Endothelial cell of umbilical vein (primary cell): ENCODE measurements at regions of chr4 and their contacts with region 1.

Region 1: GRCh38 chr4:163166041-163166579 is 580 bp downstream of the NAF1 start:
- DNase-seq: peak; percentile 73
- H3K4me3 ChIP-seq: peak overlapping the region; percentile 97
- H3K27ac ChIP-seq: peak overlapping the region; percentile 83
- H3K4me1 ChIP-seq: peaks cover 28% of the 10 kb centered on the region
- H3K27me3 ChIP-seq: no peaks in the 10 kb centered on the region
- CTCF ChIP-seq: no peak
- POLR2A ChIP-seq: no peak

Region 2: DNA sequence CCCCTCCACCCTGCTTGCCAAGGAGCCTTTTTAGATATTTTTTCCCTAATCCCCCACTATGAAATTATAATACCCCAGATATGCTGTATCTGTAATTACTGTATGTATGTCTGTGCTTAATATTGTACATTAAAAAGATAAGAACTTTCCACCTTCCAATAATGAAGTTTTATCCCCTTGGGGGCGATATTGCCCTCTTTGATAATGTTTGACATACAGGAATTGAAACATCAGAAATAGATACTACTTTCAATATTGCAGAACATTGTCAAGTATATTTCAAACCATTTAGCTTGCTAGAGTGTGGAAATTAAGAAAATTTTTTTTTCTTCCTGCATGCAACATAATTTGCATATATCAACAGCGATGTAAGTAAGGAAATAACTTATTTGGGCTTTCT is 58.4 kb before region 1 on chr4:
- CTCF ChIA-PET with region 1: interaction called, 3 read pairs
- POLR2A ChIA-PET with region 1: no interaction called
- dilution Hi-C with region 1: no loop called
- intact Hi-C with region 1: loop called (anchors 2 kb)
- DNase-seq: peak; percentile 63
- H3K4me3 ChIP-seq: no peak overlapping the region
- H3K27ac ChIP-seq: no peak overlapping the region
- H3K4me1 ChIP-seq: no peaks in the 10 kb centered on the region
- H3K27me3 ChIP-seq: no peaks in the 10 kb centered on the region
- CTCF ChIP-seq: peak in 1 of 2 donors; percentile 1
- POLR2A ChIP-seq: no peak

Region 3: GRCh38 chr4:163132469-163133218 is 33.5 kb before region 1 on chr4:
- CTCF ChIA-PET with region 1: no interaction called
- POLR2A ChIA-PET with region 1: no interaction called
- dilution Hi-C with region 1: no loop called
- intact Hi-C with region 1: loop called (anchors 2 kb)
- DNase-seq: no peak
- H3K4me3 ChIP-seq: no peak overlapping the region
- H3K27ac ChIP-seq: no peak overlapping the region
- H3K4me1 ChIP-seq: peaks cover under 1% of the 10 kb centered on the region
- H3K27me3 ChIP-seq: no peaks in the 10 kb centered on the region
- CTCF ChIP-seq: no peak
- POLR2A ChIP-seq: no peak

Region 4: DNA sequence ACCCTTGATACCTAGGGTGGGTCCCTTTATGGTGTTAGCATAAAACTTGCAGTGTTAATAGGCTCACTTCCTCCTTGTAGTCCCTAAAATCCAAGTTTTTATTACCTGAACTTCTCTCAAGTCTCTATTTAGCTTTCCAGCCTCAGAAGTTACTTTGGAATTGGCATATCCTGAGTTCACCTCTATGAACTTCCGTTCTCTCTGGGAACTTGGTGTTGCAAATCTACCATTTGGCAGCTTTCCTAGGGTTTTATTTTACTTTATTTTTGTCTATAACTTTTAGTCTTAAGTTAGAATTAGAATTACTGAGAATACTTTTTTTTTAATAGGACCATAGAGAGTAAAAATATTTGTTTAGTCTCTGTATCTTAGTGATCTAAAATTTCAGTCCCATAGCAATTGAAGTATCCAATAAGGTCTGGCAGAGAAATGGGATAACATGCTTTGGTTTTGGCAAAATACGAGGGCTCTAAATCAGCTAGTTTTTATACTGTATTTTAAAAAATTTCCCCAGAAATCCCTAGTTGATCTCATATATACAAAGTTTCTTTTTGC is 30.9 kb after region 1 on chr4:
- CTCF ChIA-PET with region 1: no interaction called
- POLR2A ChIA-PET with region 1: no interaction called
- dilution Hi-C with region 1: no loop called
- intact Hi-C with region 1: no loop called
- DNase-seq: no peak
- H3K4me3 ChIP-seq: no peak overlapping the region
- H3K27ac ChIP-seq: no peak overlapping the region
- H3K4me1 ChIP-seq: no peaks in the 10 kb centered on the region
- H3K27me3 ChIP-seq: no peaks in the 10 kb centered on the region
- CTCF ChIP-seq: no peak
- POLR2A ChIP-seq: no peak